Activated CD4-positive, alpha-beta memory T cell treated with anti-CD3 and anti-CD28 coated beads for 36 hours (primary cell): ENCODE measurements at regions of chr3 and their contacts with region 1.

Region 1: GRCh38 chr3:32257639-32258038 is 19.2 kb downstream of the CMTM8 start:
- DNase-seq: peak; percentile 26
- H3K4me3 Mint-ChIP-seq: no peak overlapping the region
- H3K27ac Mint-ChIP-seq: no peak overlapping the region
- H3K4me1 Mint-ChIP-seq: peaks cover 22% of the 10 kb centered on the region
- H3K27me3 Mint-ChIP-seq: no peaks in the 10 kb centered on the region

Region 2: DNA sequence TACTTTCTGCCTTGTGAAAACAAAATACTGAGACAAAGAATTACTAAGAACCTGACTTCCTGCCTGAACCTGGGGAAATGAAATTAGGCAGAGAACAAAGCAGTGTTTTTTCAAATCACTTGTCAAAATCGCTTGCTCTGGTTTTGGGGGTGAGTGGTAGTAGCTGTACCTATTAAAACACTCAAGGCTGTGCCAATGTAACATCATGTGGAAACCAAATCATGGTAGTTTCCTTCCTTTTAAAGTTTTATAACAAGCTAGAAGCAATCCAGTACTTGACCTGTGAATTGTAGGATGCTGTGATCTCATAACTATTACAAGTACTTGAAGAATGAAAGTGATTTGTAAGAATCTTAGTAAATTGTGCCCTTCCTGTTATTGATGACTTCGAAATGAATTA is 12.4 kb before region 1 on chr3:
- CTCF ChIA-PET with region 1: interaction called, 18 read pairs
- POLR2A ChIA-PET with region 1: interaction called, 3 read pairs
- intact Hi-C with region 1: loop called (anchors 1 kb)
- DNase-seq: no peak
- H3K4me3 Mint-ChIP-seq: no peak overlapping the region
- H3K27ac Mint-ChIP-seq: peak overlapping the region; percentile 4
- H3K4me1 Mint-ChIP-seq: peaks cover 59% of the 10 kb centered on the region
- H3K27me3 Mint-ChIP-seq: no peaks in the 10 kb centered on the region